ENCODE measurements at regions of chr7 and their contacts with region 1.

Region 1: GRCh38 chr7:111735661-111736551 is 173.6 kb upstream of the IMMP2L start:
- DNase-seq: peak; percentile 52 to 56
- H3K4me3 ChIP-seq: no peak overlapping the region
- H3K27ac ChIP-seq: no peak overlapping the region
- H3K4me1 ChIP-seq: 0 out of 2 replicates have a peak, but pooled peaks cover 5% of the 10 kb centered on the region
- H3K27me3 ChIP-seq: no peaks in the 10 kb centered on the region
- CTCF ChIP-seq: peak; percentile 90

Region 2: GRCh38 chr7:109844362-109844761 is 1891.5 kb before region 1 on chr7:
- CTCF ChIA-PET with region 1: no interaction called
- POLR2A ChIA-PET with region 1: no interaction called
- intact Hi-C with region 1: loop called (anchors 1 kb)
- DNase-seq: peak in 1 of 2 experiments; percentile 5
- H3K4me3 ChIP-seq: no peak overlapping the region
- H3K27ac ChIP-seq: no peak overlapping the region
- H3K4me1 ChIP-seq: no peaks in the 10 kb centered on the region
- H3K27me3 ChIP-seq: no peaks in the 10 kb centered on the region
- CTCF ChIP-seq: peak; percentile 72

Region 3: DNA sequence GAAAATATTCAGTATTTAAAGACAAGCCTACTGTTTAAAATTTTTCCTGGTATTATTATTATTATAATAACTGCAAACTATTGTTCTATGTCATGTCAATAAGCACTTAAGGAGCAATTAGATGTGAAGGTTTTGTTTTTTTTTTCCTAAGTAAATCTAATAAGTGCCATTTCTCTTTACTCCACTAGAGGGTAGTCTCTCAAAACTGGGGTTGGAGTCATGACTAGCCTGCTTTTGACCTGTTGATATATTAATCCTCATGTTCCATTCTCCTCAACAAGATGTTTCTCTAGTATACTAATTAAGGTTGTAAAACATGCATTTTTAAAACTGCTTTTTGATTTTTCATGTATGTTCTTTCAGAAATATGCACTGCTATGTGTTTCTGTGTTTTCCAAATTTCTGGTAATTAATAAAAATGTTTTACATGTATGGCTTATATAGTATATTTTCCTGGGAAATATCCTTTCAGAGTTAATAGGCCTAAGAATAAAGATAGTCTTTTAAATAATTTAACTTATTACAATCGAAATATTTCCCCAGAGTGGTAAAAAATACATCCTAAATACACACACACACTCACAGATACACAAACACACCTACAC is 646.0 kb before region 1 on chr7:
- CTCF ChIA-PET with region 1: no interaction called
- POLR2A ChIA-PET with region 1: no interaction called
- intact Hi-C with region 1: loop called (anchors 5 kb)
- DNase-seq: no peak
- H3K4me3 ChIP-seq: no peak overlapping the region
- H3K27ac ChIP-seq: no peak overlapping the region
- H3K4me1 ChIP-seq: no peaks in the 10 kb centered on the region
- H3K27me3 ChIP-seq: no peaks in the 10 kb centered on the region
- CTCF ChIP-seq: peak; percentile 82

Region 4: DNA sequence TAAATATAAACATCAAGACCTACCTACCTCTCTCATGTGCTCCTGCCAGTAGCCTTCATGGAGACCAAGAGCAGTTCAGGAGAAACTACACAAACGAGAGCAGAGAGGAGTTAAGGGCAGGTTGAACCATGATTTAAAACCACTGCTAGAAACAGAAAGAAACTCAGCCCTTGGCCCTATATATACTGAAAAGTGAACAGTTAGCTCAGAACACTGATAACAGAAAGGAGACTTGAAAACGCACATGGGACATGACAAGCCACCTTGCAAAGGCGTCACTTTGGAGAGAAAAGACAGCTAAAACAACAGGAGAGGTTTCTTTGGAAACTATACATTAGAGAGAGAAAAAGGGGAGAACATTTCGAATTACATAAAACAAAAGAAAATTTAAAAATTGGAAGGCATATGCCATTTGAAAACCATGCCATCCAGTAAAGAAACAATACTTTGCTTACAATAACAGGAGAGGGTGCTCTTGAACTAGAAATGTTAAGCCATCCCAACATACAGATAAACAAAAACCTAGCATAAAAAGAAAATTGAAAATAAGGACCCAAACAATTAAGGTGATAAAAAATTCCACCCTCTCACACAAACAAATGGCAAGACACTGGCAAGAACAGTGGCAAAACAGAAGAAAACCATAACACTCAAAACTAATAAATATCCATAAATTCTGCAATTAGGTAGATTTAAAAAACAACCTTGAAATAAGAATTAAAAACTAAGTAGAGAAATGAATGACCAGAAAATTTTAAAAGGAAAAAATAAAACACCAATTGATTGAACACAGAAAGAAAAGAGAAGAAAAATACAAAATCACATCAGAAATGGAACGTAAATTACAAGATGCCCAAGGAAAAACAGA is 406.3 kb before region 1 on chr7:
- CTCF ChIA-PET with region 1: no interaction called
- POLR2A ChIA-PET with region 1: no interaction called
- intact Hi-C with region 1: loop called (anchors 10 kb)
- DNase-seq: no peak
- H3K4me3 ChIP-seq: no peak overlapping the region
- H3K27ac ChIP-seq: no peak overlapping the region
- H3K4me1 ChIP-seq: no peaks in the 10 kb centered on the region
- H3K27me3 ChIP-seq: no peaks in the 10 kb centered on the region
- CTCF ChIP-seq: 0 out of 2 replicates have a peak, but pooled peaks have one; percentile 13

Region 5: DNA sequence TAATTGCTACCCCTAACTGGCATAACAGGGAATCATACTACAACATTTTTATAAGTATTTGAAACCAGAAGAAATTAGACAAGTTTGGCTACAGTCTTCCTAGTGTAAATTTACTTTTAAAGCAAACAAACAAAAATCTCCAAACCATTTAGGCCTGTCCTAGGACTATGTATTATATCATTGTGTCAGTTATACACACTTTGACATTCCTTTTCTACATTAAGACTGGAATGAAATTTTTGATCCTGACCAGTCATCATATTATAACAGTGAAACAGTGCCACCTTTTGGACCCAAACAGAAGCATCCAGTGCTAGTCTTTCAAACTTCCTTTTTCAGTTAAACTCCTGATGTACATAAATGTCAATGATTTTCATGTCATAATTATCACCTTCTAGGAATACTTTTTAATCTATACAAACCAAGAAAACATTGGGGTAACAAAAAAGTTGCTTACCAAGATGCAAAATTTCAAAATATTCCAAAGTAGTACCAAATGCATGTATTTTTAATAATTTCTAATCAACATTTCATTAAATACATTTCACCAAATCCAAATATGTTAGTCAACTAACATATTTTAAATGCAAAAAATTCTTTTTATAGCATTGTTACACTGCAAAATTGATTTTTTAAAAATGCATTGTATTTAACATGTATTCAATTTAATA is 249.3 kb before region 1 on chr7:
- CTCF ChIA-PET with region 1: no interaction called
- POLR2A ChIA-PET with region 1: no interaction called
- intact Hi-C with region 1: loop called (anchors 10 kb)
- DNase-seq: no peak
- H3K4me3 ChIP-seq: no peak overlapping the region
- H3K27ac ChIP-seq: no peak overlapping the region
- H3K4me1 ChIP-seq: no peaks in the 10 kb centered on the region
- H3K27me3 ChIP-seq: no peaks in the 10 kb centered on the region
- CTCF ChIP-seq: peak; percentile 76

Region 6: DNA sequence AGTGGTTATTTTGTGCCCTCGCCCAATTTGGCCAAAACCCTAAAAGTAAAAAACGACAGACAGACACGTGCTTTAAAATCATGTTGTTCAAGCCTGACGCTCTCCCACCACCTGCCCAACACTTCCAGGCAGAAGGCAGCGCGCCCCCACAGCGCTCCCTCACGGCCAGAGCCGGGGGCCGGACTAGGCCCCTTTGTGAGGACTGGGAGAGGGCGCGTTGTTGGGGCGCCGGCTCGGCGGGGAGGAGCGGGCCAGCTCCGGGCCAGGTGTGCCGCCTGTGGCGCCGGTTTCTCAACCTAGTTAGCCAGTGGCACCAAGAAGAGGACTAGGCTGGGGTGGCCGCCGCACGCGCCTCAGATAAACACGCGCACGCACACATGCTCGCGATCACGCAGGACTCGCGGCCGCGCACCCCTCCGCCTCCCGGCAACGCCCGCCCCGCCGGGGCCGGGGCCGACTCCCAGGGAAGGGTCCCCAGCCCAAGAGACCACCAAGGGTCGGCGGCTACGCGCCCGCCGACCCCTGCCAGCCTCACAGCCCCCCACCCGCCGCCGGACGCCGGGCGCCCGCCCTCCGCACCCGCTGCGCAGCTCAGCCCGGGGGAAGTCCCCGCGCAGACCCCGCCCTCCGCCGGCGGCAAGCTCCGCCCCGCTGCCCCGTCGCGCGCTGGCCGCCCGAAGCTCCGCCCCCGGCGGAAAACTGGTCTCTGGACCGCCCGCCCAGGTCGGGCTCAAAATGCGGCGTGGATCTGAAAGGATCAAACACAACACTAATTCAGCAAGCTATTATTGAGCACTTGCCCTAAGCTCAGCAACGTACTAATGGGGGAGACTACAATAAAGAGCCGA is 173.8 kb before region 1 on chr7 and contains the start of gene IMMP2L:
- CTCF ChIA-PET with region 1: no interaction called
- POLR2A ChIA-PET with region 1: no interaction called
- intact Hi-C with region 1: loop called (anchors 10 kb)
- DNase-seq: peak; percentile 54 to 95
- H3K4me3 ChIP-seq: peak within 1 kb of the TSS; percentile 69
- H3K27ac ChIP-seq: peak within 1 kb of the TSS; percentile 61
- H3K4me1 ChIP-seq: peaks cover 20% of the 10 kb centered on the region
- H3K27me3 ChIP-seq: no peaks in the 10 kb centered on the region
- CTCF ChIP-seq: no peak; the same call in 1 of the 2 replicates
- total RNA-seq, gene IMMP2L: 40.5 and 51.0 TPM in 2 replicates

Region 7: GRCh38 chr7:111697776-111698175 is 38.1 kb before region 1 on chr7:
- CTCF ChIA-PET with region 1: no interaction called
- POLR2A ChIA-PET with region 1: no interaction called
- intact Hi-C with region 1: no loop called
- DNase-seq: no peak
- H3K4me3 ChIP-seq: no peak overlapping the region
- H3K27ac ChIP-seq: no peak overlapping the region
- H3K4me1 ChIP-seq: no peaks in the 10 kb centered on the region
- H3K27me3 ChIP-seq: no peaks in the 10 kb centered on the region
- CTCF ChIP-seq: no peak

Region 8: DNA sequence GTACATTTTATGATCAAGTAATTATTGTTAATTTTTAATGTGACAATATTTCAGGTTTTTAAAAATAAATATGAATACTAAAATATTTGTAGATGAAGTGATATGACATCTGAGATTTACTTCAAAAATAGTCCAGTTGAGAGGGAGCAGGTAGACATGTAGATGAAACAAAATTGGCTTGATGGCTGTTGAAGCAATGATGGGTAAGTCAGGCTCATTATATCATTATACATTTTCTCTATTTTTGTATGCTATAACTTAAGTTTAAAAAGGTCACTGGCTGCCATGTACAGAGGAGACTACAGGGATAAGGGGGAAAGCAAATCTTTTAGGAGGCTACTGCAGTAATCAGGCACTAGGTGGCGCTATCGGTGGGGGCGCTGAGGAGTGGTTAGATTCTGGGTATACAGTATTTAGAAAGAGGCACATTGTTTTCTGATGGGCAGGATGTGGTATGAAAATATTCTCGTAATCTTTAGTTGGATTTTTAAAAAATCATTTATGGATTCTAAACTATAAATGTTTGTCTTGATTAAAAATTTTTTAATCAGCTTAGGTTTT is 16.2 kb after region 1 on chr7:
- CTCF ChIA-PET with region 1: no interaction called
- POLR2A ChIA-PET with region 1: no interaction called
- intact Hi-C with region 1: no loop called
- DNase-seq: peak in 1 of 2 experiments; percentile 63
- H3K4me3 ChIP-seq: no peak overlapping the region
- H3K27ac ChIP-seq: no peak overlapping the region
- H3K4me1 ChIP-seq: peaks cover 14% of the 10 kb centered on the region; the same call in 1 of the 2 replicates
- H3K27me3 ChIP-seq: no peaks in the 10 kb centered on the region
- CTCF ChIP-seq: peak; percentile 87

Measured in PC-9 (cell line).